GM13976 (cell line): ENCODE measurements at regions of chr13 and their contacts with region 1.

Region 1: DNA sequence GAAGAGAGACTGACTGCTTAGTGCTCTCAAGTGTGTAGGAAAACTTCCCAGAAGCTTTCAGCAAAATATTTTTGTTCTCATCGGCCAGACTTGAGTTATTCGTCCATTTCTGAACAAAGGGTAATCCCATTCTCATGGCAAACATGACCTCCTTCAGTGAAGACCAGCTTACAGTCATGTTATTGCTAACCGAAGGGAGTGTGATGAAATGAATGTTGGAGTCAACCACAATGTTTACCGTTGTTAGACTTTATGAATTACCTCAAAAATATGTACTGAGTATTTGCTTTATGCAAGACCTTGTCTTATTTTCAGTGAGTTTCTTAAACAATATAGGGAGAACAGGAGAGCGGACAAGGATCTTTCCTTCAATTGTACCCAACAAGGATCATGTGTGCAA is 228.6 kb downstream of the LMO7 start:
- DNase-seq: no peak
- CTCF ChIP-seq: no peak

Region 2: DNA sequence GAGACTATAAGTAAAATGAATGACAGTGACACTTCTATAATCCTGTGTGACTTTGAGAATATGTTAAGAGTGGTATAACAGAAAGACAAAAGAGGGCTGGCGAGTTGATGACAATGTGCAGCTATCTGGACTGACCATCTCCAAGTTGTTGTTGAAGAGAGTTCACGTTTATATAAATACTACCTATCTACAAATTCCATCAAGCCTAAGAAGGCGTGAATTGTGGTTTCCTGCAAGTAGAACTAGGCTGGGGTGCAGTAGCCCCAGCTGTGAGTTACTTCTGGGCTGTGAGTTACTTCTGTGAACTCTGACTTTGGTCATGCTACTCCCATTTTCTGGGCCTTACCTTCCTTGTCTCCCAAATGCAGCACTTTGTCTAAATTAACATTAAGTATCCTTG is 943.8 kb before region 1 on chr13:
- in situ Hi-C with region 1: no loop called
- DNase-seq: no peak
- CTCF ChIP-seq: no peak

Region 3: DNA sequence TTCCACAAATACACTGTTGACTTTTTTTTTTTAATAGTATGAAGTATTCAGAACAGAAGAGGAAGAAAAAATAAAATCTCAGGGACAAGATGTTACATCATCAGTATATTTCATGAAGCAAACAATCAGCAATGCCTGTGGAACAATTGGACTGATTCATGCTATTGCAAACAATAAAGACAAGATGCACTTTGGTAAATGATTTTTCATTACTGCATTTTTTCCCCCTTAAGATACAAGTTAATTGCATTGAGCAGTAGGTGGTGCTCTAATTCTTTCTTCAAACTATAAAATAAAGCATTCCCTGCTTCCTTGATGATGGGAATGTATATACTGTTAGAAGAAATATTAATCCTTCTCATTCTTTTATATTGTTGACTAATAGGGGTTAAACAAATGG is 298.1 kb before region 1 on chr13:
- in situ Hi-C with region 1: no loop called
- DNase-seq: no peak
- CTCF ChIP-seq: peak; percentile 45

Region 4: GRCh38 chr13:75687150-75687763 is 177.5 kb before region 1 on chr13:
- in situ Hi-C with region 1: loop called (anchors 5 kb)
- DNase-seq: no peak
- CTCF ChIP-seq: peak; percentile 11